A673 (cell line): ENCODE measurements at regions of chr6 and their contacts with region 1.

Region 1: DNA sequence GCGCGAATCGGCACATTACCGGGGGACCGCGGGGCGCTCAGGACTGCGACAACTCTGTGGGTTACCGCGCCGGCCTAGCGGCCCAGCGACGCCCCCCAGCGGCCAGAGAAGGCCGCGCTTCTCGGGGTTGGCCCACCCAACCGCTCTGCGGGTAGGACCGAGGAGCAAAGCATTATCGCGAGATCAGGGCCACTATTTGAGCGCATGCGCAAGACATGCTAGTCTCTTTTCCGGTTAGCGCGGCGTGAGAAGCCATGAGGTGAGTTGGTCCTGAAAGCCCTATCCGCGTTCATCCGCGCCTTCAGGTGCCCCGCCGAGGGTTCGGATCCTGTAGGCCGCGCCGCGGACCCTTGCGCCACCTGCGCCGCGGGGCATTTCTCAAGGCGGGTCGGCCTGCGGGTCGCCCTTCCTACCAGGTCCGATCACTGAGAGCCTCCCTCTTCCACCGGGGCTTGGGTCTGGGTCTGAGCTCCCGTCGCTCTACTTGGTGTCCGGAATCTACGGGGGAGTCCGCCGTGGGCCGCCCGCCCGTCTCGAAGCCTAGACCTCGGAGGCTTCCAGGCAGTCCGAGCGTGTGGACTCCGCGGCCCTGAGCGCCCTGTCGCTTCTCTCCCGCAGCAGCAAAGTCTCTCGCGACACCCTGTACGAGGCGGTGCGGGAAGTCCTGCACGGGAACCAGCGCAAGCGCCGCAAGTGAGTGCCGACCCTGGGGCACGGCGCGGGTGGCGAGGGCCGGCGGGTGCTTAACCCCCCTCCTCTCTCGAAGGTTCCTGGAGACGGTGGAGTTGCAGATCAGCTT is at the start of gene RPL10A:
- DNase-seq: peak; percentile 97
- H3K4me3 ChIP-seq: peak within 1 kb of the TSS; percentile 99
- H3K27ac ChIP-seq: peak within 1 kb of the TSS; percentile 99
- H3K4me1 ChIP-seq: peaks cover 17% of the 10 kb centered on the region
- H3K27me3 ChIP-seq: no peaks in the 10 kb centered on the region
- CTCF ChIP-seq: peak; percentile 99
- total RNA-seq, gene RPL10A: 1,064 and 1,085 TPM in 2 replicates

Region 2: DNA sequence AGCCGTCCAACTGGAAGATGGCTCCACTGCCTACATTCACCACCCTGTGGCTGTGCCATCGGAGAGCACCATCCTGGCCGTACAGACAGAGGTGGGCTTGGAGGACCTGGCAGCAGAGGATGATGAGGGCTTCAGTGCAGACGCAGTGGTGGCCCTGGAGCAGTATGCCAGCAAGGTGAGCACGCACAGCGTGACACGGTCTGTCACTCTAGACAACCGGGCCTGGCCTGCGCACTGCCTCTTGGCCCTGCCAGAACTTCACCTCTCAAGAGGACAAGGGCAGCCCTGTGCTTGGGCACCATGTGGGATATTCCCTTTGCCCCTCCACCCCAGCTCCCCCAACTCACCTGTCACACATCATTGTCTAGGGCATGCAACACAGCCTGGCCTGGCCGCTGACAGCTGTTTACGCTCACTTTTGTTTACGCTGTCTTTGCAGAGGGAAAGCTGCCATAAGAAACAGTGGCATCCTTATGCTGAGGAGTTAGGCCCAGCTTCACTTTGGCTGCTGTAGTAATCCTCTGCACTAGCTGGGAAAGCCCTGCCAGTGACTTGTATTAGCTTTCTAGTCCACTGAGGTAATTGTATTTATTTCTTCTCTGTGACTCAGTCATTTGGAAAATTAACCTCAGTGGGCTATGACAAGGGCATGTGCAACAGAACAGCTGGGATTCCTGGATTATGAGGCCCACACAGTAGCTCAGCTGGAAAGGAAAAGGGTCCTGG is 180.5 kb before region 1 on chr6:
- CTCF ChIA-PET with region 1: no interaction called
- POLR2A ChIA-PET with region 1: no interaction called
- intact Hi-C with region 1: no loop called
- DNase-seq: no peak
- H3K4me3 ChIP-seq: no peak overlapping the region
- H3K27ac ChIP-seq: no peak overlapping the region
- H3K4me1 ChIP-seq: no peaks in the 10 kb centered on the region
- H3K27me3 ChIP-seq: no peaks in the 10 kb centered on the region
- CTCF ChIP-seq: no peak

Region 3: DNA sequence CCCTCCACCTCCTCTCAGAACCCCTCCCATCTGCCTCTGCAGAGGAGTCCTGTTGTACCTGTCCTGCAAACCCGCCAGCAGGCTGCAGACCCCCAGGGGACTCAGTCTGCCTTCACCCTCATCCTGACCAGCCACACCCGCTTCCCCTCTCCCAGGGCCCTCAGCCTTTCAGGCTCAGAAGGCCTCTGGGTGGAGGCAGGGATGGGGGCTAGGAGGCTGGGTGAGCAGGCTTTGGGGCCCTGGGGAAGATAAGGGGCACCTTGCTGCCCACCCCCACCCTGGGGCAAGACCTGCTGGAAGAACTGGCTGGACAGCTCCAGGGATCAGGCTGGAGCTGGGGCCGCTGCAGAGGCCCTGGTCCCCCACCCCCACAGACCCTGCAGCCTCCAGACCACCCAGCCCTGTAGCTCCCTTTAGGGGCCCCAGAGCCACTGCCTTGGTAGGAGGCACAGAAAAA is 23.2 kb after region 1 on chr6:
- CTCF ChIA-PET with region 1: interaction called, 10 read pairs
- POLR2A ChIA-PET with region 1: no interaction called
- intact Hi-C with region 1: no loop called
- DNase-seq: no peak
- H3K4me3 ChIP-seq: no peak overlapping the region
- H3K27ac ChIP-seq: peak overlapping the region; percentile 71
- H3K4me1 ChIP-seq: peaks cover 60% of the 10 kb centered on the region
- H3K27me3 ChIP-seq: no peaks in the 10 kb centered on the region
- CTCF ChIP-seq: no peak